ENCODE measurements at regions of chr13 and their contacts with region 1.

Region 1: DNA sequence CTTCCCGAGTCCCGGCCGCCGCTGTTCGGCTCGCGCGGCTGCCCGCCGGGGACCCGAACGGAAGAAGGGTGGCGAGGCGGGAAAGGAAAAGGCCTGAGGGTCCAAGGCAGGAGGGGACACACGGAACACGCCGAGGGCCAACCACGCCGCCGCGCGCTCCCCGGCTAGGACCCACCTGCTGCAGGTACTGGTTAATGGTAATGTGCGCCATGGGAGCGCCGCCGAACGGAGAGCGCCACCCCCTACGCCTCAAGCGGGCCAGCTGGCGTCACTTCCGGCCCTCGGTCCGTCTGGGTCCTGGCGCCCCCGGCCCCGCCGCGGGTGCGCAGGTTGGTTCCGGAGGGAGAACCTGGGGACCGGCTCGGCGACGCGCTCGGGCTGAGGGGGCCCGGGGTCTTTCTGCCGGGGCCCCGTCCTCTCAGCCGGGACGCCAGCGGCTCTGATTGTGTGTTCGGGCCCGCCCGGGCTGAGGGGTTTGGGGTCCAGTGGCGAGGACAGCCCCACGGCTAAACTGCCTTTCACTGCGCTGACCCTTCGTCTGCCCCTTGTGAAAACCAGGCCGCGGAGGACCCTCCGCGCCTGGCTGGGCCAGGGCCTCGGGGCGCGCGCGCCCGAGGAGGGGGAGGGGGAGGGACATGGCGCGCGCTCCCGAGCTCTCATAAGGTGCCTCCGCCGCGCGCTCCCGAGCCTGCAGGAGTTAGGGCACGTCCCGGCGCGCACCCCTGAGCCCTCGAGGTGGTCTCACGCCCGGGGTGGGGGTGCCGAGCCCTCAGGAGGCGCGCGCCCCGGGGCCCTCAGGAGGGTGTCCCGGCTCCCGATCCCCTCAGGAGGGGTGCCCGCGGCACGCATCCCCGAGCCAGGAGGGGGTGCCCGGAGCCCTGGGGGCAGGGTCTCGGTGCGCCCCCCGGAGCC is at the start of gene PCID2:
- DNase-seq: peak; percentile 96
- H3K4me3 ChIP-seq: peak within 1 kb of the TSS; percentile 87 to 88 (median 88)
- H3K27ac ChIP-seq: peak within 1 kb of the TSS; percentile 99 to 100 (median 100)
- H3K4me1 ChIP-seq: peaks cover 47 to 82% (median 80%) of the 10 kb centered on the region in 4 donors
- H3K27me3 ChIP-seq: no peaks in the 10 kb centered on the region
- CTCF ChIP-seq: no peak
- EP300 ChIP-seq: no peak
- POLR2A ChIP-seq: peak; percentile 78
- total RNA-seq, gene PCID2: 34.5 to 46.9 (median 42.3) TPM

Region 2: DNA sequence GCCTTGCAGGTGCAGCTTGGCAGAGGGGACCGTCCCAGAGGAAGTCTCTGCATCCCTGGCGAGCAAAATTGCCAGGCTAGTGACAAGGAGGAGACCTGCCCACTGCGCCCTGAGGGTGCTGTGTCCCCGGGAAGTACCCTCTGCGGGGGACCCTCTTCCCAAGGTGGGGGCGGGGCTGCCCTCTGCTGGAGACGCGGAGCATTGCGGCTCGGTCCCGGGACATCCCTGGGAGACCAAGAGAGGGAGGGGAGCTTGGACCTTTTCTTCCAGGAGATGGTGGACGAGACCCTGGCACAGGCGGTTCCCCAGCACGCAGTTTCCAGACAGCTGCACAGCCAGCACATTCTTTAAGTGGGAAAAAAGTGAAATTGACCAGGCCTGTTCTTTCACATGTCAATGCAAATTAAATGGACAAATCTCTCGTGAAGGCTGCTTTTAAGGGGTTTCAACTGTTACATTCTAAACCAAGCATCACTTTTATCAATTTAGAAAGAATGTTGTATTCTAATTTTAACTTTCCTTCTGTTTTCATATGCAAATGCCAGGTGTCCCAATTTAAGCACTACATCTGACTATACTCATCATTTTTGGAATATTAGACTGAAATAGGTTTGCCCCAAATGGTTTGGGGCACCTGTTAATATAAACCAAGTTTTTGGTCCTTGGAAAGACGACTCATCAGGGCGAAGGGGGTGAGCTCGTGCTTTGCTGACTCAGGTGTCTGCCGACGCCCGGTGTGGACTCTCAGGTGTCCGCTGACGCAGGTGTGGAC is 179.0 kb before region 1 on chr13:
- intact Hi-C with region 1: loop called (anchors 10 kb)
- DNase-seq: no peak
- H3K4me3 ChIP-seq: no peak overlapping the region
- H3K27ac ChIP-seq: no peak overlapping the region
- H3K4me1 ChIP-seq: peaks cover 0 to 1% (median under 1%) of the 10 kb centered on the region in 4 donors
- H3K27me3 ChIP-seq: peaks cover 0 to 39% (median 0%) of the 10 kb centered on the region in 4 donors
- CTCF ChIP-seq: peak; percentile 44 to 66 (median 49)
- EP300 ChIP-seq: no peak
- POLR2A ChIP-seq: no peak

Region 3: DNA sequence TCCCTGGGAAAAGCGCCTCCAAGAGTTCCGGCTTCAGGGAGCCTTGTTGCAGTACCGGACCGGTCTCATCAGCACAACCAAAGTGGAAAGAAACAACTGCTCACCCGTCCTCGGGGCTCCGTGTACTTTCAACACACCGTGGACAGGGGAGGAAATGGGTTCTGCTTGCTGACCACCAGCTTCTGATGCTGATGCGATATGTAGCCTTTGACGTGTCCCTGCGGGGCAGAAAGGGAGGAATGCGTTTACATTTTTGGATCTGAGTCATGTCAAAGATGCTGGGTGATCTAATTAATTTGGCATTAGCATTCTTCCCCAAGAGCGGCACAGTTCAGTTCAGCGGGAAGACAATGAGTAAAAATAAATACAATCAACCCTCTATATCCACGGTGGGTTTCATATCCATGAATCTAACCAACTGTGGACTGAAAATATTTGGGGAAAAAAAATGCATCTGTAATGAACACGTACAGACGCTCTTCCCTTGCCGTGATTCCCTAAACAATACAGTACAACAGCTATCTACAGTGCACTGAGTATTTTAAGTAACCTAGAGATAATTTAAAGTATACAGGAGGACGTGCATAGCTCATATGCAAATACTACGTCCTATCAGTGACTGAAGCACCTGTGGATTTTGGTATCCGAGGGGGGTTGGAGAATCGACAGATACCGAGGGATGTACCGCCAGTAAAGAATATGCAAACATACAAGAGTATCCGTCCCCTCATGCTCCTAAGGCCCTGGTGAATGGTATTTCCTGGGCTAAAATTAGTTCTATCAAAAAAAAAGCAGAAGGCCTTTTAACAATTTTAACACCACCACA is 30.4 kb before region 1 on chr13:
- intact Hi-C with region 1: no loop called
- DNase-seq: no peak
- H3K4me3 ChIP-seq: no peak overlapping the region
- H3K27ac ChIP-seq: peak overlapping the region in 3 of 4 donors; percentile 6 to 46 (median 20)
- H3K4me1 ChIP-seq: peaks cover 0 to 17% (median 12%) of the 10 kb centered on the region in 4 donors
- H3K27me3 ChIP-seq: no peaks in the 10 kb centered on the region
- CTCF ChIP-seq: no peak
- EP300 ChIP-seq: no peak
- POLR2A ChIP-seq: no peak

Measured in esophagus muscularis mucosa (tissue), 4 donors.